HCT116 (cell line): ENCODE measurements at regions of chr7 and their contacts with region 1.

Region 1: GRCh38 chr7:151315038-151315655 is 26.5 kb upstream of the NUB1 start:
- DNase-seq: peak; percentile 54
- ATAC-seq: peak; percentile 87
- H3K4me3 ChIP-seq: no peak overlapping the region
- H3K27ac ChIP-seq: no peak overlapping the region
- H3K4me1 ChIP-seq: no peaks in the 10 kb centered on the region
- H3K27me3 ChIP-seq: no peaks in the 10 kb centered on the region
- CTCF ChIP-seq: peak; percentile 72 to 86 (median 78)
- POLR2A ChIP-seq: no peak
- RAD21 ChIP-seq: peak; percentile 86

Region 2: GRCh38 chr7:151327659-151328058 is 12.5 kb after region 1 on chr7:
- CTCF ChIA-PET with region 1: interaction called, 11 read pairs
- POLR2A ChIA-PET with region 1: no interaction called
- RAD21 ChIA-PET with region 1: no interaction called
- intact Hi-C with region 1: no loop called
- DNase-seq: no peak
- ATAC-seq: no peak
- H3K4me3 ChIP-seq: no peak overlapping the region
- H3K27ac ChIP-seq: no peak overlapping the region
- H3K4me1 ChIP-seq: no peaks in the 10 kb centered on the region
- H3K27me3 ChIP-seq: no peaks in the 10 kb centered on the region
- CTCF ChIP-seq: no peak
- POLR2A ChIP-seq: no peak
- RAD21 ChIP-seq: no peak

Region 3: DNA sequence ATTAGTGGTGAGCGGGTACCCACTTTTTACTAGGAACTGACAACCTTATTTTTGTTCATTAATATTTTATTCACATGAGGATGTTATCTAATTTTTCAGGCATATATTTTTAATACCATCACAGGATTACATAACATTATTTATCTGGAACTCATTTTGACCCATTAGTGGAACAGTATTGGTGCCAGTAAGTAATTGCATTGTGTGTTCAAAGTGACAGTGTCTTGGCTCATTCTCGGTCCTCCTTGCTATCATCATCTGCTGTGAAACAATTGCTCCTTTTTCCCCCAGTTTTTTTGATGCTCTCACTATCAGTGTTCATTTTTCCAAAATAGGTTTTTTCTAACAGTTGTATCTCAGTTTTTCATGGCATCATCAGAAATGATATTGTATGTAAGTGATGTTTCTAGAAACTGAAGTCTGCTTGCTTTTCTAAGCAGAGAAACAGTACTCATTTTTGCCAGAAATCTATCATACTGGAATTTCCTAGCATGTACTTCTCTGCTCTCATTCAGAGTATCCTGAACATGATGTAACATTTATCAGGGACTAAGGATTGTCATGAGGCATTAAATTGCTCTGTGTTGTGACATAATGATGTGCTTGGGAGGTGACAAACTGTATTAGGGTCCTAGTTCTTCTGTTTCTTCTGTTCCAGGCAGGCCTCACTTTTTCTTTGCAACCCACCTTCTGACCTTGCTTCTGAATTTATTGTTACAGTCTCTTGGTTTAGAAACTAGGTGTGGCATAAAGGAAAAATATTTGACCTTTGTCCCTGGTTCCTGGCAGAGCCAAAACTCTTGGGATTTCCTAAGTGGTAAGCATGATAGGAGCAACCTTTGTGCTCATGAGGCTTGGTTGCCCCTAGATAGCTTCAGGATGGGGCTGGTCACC is 30.7 kb after region 1 on chr7:
- CTCF ChIA-PET with region 1: interaction called, 18 read pairs
- POLR2A ChIA-PET with region 1: interaction called, 4 read pairs
- RAD21 ChIA-PET with region 1: interaction called in 1 of 2 experiments, 3 read pairs
- intact Hi-C with region 1: loop called (anchors 1 kb)
- DNase-seq: no peak
- ATAC-seq: no peak
- H3K4me3 ChIP-seq: no peak overlapping the region
- H3K27ac ChIP-seq: peak overlapping the region; percentile 33; the same call in 1 of the 2 replicates
- H3K4me1 ChIP-seq: peaks cover 21 to 29% of the 10 kb centered on the region in 2 experiments
- H3K27me3 ChIP-seq: no peaks in the 10 kb centered on the region
- CTCF ChIP-seq: no peak
- POLR2A ChIP-seq: no peak
- RAD21 ChIP-seq: no peak

Region 4: DNA sequence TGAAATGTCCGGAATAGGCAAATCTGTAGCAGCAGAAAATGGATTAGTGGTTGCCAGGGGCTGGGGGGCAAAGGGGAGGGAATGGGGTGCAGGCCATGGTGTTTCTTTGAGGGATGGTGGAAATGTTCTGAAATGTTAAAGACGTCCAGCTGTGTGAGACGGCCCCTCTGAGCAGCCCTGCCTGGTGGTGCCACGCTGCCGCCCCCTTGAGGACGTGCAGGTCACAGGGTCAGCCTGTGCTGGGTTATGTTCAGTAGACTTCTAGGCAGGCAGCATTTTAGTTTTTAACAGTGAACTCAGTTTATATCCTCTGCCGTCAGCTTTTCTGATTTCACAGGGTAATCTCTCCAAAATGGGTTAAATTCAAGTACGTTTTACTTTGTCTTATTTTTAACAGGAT is 35.9 kb after region 1 on chr7:
- CTCF ChIA-PET with region 1: interaction called, 18 read pairs
- POLR2A ChIA-PET with region 1: no interaction called
- RAD21 ChIA-PET with region 1: interaction called in 1 of 2 experiments, 4 read pairs
- intact Hi-C with region 1: loop called (anchors 1 kb)
- DNase-seq: no peak
- ATAC-seq: peak; percentile 74
- H3K4me3 ChIP-seq: no peak overlapping the region
- H3K27ac ChIP-seq: no peak overlapping the region
- H3K4me1 ChIP-seq: peaks cover 7 to 8% of the 10 kb centered on the region in 2 experiments
- H3K27me3 ChIP-seq: no peaks in the 10 kb centered on the region
- CTCF ChIP-seq: peak in 2 of 3 experiments; percentile 42 to 54; a peak in 5 of 6 replicates
- POLR2A ChIP-seq: no peak
- RAD21 ChIP-seq: peak; percentile 9; the same call in 1 of the 2 replicates

Region 5: GRCh38 chr7:151448261-151449252 is 133.4 kb after region 1 on chr7:
- CTCF ChIA-PET with region 1: interaction called, 14 read pairs
- POLR2A ChIA-PET with region 1: no interaction called
- RAD21 ChIA-PET with region 1: interaction called in 1 of 2 experiments, 3 read pairs
- intact Hi-C with region 1: loop called (anchors 1 kb)
- DNase-seq: peak; percentile 13
- ATAC-seq: peak; percentile 88
- H3K4me3 ChIP-seq: peak overlapping the region; percentile 34 to 53
- H3K27ac ChIP-seq: peak overlapping the region; percentile 19; the same call in 1 of the 2 replicates
- H3K4me1 ChIP-seq: peaks cover 13 to 33% of the 10 kb centered on the region in 2 experiments; a peak in 3 of 4 replicates
- H3K27me3 ChIP-seq: no peaks in the 10 kb centered on the region
- CTCF ChIP-seq: peak; percentile 70 to 94 (median 76)
- POLR2A ChIP-seq: no peak
- RAD21 ChIP-seq: peak; percentile 93

Region 6: DNA sequence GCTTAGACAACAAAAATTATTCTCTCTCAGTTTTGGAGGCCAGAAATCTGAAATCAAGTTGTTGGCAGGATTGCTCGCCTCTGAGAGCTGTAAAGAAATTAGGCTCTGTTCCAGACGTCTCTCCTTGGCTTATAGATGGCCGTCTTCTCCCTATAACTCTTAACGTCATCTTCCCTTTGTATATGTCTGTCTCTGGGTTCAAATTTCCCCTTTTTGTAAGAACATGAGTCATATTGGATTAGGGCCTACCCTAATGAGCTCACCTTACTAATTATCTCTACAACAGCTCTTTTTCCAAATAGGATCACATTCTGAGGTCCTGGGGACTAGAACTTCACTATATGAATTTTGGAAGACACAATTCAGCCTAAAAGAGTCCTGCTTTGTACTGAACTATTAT is 663.5 kb after region 1 on chr7:
- CTCF ChIA-PET with region 1: no interaction called
- POLR2A ChIA-PET with region 1: no interaction called
- RAD21 ChIA-PET with region 1: no interaction called
- intact Hi-C with region 1: no loop called
- DNase-seq: no peak
- ATAC-seq: no peak
- H3K4me3 ChIP-seq: no peak overlapping the region
- H3K27ac ChIP-seq: no peak overlapping the region
- H3K4me1 ChIP-seq: no peaks in the 10 kb centered on the region
- H3K27me3 ChIP-seq: no peaks in the 10 kb centered on the region
- CTCF ChIP-seq: no peak
- POLR2A ChIP-seq: no peak
- RAD21 ChIP-seq: no peak